ENCODE measurements at regions of chr16 and their contacts with region 1.

Region 1: DNA sequence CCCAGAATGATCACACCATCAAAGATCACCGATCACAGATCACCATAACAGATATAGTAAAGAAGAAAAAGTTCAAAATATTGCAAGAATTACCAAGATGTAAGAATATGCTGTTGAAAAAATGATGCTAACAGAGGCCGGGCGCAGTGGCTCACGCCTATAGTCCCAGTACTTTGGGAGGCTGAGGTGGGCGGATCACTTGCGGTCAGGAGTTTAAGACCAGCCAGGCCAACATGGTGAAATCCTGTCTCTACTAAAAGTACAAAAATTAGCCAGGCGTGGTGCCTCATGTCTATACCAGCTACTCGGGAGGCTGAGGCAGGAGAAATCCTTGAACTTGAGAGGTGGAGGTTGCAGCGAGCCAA is 53.2 kb downstream of the CPPED1 start:
- DNase-seq: no peak
- H3K4me3 Mint-ChIP-seq: peak overlapping the region; percentile 58
- H3K27ac Mint-ChIP-seq: peak overlapping the region; percentile 77
- H3K4me1 Mint-ChIP-seq: peaks cover 33% of the 10 kb centered on the region
- H3K27me3 Mint-ChIP-seq: no peaks in the 10 kb centered on the region

Region 2: DNA sequence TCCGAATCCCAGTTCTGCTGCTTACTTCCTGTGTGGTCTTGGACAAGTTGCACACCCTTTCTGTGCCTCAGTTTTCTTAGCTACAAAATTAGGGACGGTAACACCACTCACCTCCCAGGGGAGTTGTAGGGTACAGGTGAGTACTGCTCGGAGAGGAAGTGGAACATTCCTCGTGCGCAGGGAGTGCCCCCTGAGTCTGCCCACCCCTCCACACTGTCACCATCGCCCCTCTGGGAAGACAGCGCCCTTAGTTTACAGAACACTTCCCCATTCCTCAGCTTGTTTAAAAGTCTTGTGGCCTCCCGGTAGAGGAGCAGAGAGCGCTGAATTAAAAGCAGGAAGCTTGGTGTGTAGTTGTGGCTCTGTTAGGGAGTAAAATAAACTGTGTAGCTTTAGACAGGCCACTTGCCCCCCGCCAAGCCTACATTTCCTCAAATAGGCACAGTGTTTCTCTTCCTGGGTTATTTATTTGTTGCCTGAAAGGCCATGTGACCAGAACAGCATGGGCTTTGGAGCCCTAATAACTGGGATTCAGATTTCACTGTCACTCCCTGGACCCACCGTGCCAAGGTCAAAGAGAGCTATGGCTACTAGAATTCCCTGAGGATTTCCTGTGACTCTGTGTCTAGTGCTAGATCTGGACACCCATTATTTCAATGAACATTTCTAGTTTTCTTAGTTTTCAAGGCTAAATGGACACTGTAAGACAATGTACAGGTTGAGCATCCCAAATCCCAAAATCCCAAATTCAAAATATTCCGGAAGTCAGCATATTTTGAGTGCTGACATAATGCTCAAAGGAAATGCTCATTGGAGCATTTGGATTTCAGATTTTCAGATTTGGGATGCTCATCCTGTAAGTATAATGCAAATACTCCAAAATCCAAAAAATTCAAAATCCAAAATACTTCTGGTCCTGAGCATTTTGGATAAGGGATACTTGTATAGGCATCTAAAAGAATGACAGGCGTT is 401.5 kb before region 1 on chr16:
- intact Hi-C with region 1: no loop called
- DNase-seq: no peak
- H3K4me3 Mint-ChIP-seq: no peak overlapping the region
- H3K27ac Mint-ChIP-seq: no peak overlapping the region
- H3K4me1 Mint-ChIP-seq: no peaks in the 10 kb centered on the region
- H3K27me3 Mint-ChIP-seq: no peaks in the 10 kb centered on the region

Region 3: GRCh38 chr16:12613131-12613991 is 137.2 kb before region 1 on chr16:
- intact Hi-C with region 1: loop called (anchors 1 kb)
- DNase-seq: no peak
- H3K4me3 Mint-ChIP-seq: no peak overlapping the region
- H3K27ac Mint-ChIP-seq: peak overlapping the region; percentile 61
- H3K4me1 Mint-ChIP-seq: peaks cover 35% of the 10 kb centered on the region
- H3K27me3 Mint-ChIP-seq: peaks cover 6% of the 10 kb centered on the region

Region 4: GRCh38 chr16:12729448-12729847 is 21.1 kb before region 1 on chr16:
- intact Hi-C with region 1: loop called (anchors 1 kb)
- DNase-seq: no peak
- H3K4me3 Mint-ChIP-seq: no peak overlapping the region
- H3K27ac Mint-ChIP-seq: no peak overlapping the region
- H3K4me1 Mint-ChIP-seq: peaks cover 10% of the 10 kb centered on the region
- H3K27me3 Mint-ChIP-seq: no peaks in the 10 kb centered on the region

Region 5: GRCh38 chr16:12803203-12804097 is 52.9 kb after region 1 on chr16 and contains the start of gene CPPED1:
- intact Hi-C with region 1: loop called (anchors 1 kb)
- DNase-seq: peak; percentile 89
- H3K4me3 Mint-ChIP-seq: peak within 1 kb of the TSS; percentile 93
- H3K27ac Mint-ChIP-seq: peak within 1 kb of the TSS; percentile 91
- H3K4me1 Mint-ChIP-seq: peaks cover 26% of the 10 kb centered on the region
- H3K27me3 Mint-ChIP-seq: no peaks in the 10 kb centered on the region
- total RNA-seq, gene CPPED1: 5.0 and 5.4 TPM in 2 replicates

Region 6: DNA sequence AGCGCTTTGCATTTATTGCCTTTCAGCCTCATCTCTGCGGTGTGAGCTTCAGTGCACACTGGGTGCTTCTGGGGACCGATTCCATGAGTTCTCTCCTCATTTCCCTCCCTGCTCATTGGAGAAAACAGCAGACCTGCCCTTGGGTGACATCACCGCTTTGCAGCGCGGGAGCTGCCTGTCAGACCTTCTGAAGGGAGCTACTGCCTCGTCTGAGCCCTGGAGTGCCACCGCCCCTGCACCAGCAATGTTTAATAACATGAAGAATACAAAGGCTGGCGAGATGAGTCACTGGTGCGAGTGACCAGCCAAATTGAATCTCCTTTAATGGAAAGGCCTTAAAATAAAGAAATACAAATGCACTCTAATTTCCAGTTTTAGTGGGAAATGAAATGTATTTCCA is 83.4 kb after region 1 on chr16:
- intact Hi-C with region 1: no loop called
- DNase-seq: no peak
- H3K4me3 Mint-ChIP-seq: no peak overlapping the region
- H3K27ac Mint-ChIP-seq: no peak overlapping the region
- H3K4me1 Mint-ChIP-seq: peaks cover 8% of the 10 kb centered on the region
- H3K27me3 Mint-ChIP-seq: peaks cover 11% of the 10 kb centered on the region